Astrocyte of the cerebellum (primary cell): ENCODE measurements at regions of chr4 and their contacts with region 1.

Region 1: GRCh38 chr4:92840880-92841279 is 537.1 kb downstream of the GRID2 start:
- DNase-seq: no peak
- H3K4me3 ChIP-seq: no peak overlapping the region
- CTCF ChIP-seq: no peak

Region 2: DNA sequence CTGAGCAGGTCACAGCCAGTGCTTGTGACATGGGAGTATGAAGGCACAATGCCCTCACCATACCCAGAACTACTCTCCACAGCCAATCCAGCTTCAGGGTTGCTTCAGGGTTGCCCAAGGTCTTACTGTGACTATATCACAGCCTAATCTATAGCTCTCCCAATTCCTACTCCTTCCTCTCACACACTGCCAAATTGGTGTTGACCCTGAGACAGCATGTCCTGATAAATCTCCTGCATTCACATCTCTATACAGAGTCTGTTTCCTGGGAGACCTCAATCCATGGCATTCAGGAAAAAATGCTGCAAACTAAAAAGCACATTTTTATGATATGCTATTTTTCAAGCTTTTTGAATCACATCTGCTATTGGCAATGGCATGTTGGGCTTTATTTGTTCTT is 80.4 kb before region 1 on chr4:
- in situ Hi-C with region 1: no loop called
- DNase-seq: no peak
- H3K4me3 ChIP-seq: no peak overlapping the region
- CTCF ChIP-seq: no peak

Region 3: DNA sequence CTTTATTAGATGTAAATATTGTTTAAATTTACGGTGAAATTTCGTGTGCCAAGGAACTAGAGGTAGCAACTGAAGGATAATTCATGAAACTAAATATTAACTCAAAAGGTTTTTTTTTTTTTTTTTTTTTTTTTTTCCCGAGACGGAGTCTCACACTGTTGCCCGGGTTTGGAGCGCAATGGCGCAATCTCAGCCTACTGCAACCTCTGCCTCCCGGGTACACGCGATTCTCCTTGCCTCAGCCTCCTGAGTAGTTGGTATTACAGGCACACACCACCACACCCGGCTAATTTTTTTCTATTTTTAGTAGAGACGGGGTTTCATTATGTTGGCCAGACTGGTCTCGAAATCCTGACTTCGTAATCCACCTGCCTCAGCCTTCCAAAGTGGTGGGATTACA is 34.2 kb after region 1 on chr4:
- in situ Hi-C with region 1: loop called (anchors 5 kb)
- DNase-seq: no peak
- H3K4me3 ChIP-seq: no peak overlapping the region
- CTCF ChIP-seq: no peak